GM12878 (cell line): ENCODE measurements at regions of chrX and their contacts with region 1.

Region 1: DNA sequence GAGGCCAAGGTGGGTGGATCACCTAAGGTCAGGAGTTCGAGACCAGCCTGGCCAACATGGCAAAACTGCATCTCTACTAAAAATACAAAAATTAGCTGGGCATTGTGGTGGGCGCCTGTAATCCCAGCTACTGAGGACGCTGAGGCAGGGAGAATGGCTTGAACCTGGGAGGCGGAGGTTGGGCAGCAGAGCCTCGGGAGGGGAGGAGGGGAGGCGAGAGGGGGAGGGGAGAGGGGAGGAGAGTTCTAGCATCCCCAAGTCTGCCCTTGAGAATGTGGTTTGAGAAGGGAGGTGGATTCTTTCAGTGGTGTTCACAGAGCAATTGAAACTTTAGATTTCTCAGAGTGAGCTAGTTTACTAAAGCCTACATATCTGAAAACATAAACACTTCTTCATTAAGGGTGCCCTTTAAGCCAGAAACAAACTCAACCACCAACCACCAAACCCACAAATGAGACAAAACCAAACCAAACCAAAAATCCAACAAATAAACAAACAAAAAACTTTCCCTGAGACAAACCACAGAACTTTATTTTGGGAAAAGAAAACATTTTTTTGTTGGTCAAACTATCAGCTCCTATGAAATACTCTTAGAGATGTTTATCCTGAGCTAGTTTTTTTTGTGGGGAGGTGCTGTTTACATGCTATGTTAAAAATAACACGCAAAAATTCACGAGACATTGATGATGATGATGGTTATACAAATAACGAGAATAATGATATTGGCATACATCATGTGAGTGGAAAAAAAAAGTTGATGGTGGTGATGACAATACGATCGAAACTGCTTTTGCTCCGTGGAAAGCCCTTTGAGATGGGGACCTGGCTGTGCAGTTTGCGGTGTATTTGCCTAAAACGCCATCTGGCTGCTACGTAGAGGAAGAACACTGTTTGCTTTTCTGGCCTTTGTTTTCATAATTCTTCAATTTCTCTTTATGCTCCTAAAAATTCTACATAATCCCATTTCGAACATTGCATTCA is 98.2 kb upstream of the PRKX start:
- DNase-seq: peak; percentile 84
- ATAC-seq: peak; percentile 22
- H3K4me3 ChIP-seq: no peak overlapping the region; the same call in 1 of the 2 replicates
- H3K27ac ChIP-seq: peak overlapping the region; percentile 39
- H3K4me1 ChIP-seq: peaks cover 24% of the 10 kb centered on the region
- H3K27me3 ChIP-seq: 0 out of 4 replicates have a peak, but pooled peaks cover under 1 to 2% of the 10 kb centered on the region in 2 experiments
- CTCF ChIP-seq: peak; percentile 59 to 86 (median 75); a peak in 5 of 6 replicates
- EP300 ChIP-seq: peak; percentile 40 to 72; a peak in 3 of 4 replicates
- POLR2A ChIP-seq: no peak
- RAD21 ChIP-seq: peak; percentile 90

Region 2: GRCh38 chrX:3046253-3047240 is 765.1 kb before region 1 on chrX:
- CTCF ChIA-PET with region 1: no interaction called
- POLR2A ChIA-PET with region 1: no interaction called
- RAD21 ChIA-PET with region 1: no interaction called
- SMC1A ChIA-PET with region 1: no interaction called
- in situ Hi-C with region 1: loop called (anchors 25 kb)
- intact Hi-C with region 1: no loop called
- DNase-seq: no peak
- ATAC-seq: peak; percentile 41; the same call in 2 of the 3 replicates
- H3K4me3 ChIP-seq: no peak overlapping the region
- H3K27ac ChIP-seq: no peak overlapping the region
- H3K4me1 ChIP-seq: no peaks in the 10 kb centered on the region
- H3K27me3 ChIP-seq: no peaks in the 10 kb centered on the region
- CTCF ChIP-seq: no peak
- EP300 ChIP-seq: no peak
- POLR2A ChIP-seq: no peak
- RAD21 ChIP-seq: no peak

Region 3: DNA sequence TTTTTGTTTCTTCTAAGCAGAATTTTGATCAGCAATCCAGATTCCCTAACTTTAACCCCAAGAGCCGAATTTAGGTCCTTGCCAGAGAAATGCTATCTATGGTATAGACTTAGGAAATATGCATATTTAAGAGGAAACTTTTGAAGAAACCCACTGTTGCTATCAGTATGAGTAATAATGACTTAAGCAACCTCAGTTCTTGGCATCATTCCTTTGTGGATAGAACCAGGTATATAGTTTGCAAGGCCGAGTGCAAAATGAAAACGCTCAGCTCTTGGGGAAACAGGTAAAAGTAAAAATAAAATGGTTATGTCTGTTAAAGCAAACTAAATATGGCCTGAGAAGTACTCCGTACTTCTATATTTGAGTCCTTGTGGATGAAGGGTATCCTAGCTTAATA is 692.2 kb before region 1 on chrX:
- CTCF ChIA-PET with region 1: interaction called, 5 read pairs
- POLR2A ChIA-PET with region 1: no interaction called
- RAD21 ChIA-PET with region 1: interaction called, 4 read pairs
- SMC1A ChIA-PET with region 1: no interaction called
- in situ Hi-C with region 1: no loop called
- intact Hi-C with region 1: loop called (anchors 5 kb)
- DNase-seq: no peak
- ATAC-seq: no peak
- H3K4me3 ChIP-seq: no peak overlapping the region
- H3K27ac ChIP-seq: no peak overlapping the region
- H3K4me1 ChIP-seq: no peaks in the 10 kb centered on the region
- H3K27me3 ChIP-seq: no peaks in the 10 kb centered on the region
- CTCF ChIP-seq: no peak
- EP300 ChIP-seq: no peak
- POLR2A ChIP-seq: no peak
- RAD21 ChIP-seq: no peak

Region 4: GRCh38 chrX:3651276-3651675 is 160.3 kb before region 1 on chrX:
- CTCF ChIA-PET with region 1: interaction called, 44 read pairs
- POLR2A ChIA-PET with region 1: interaction called, 4 read pairs
- RAD21 ChIA-PET with region 1: interaction called, 34 read pairs
- SMC1A ChIA-PET with region 1: interaction called, 24 read pairs
- in situ Hi-C with region 1: loop called (anchors 5 kb)
- intact Hi-C with region 1: loop called (anchors 1 kb)
- DNase-seq: no peak
- ATAC-seq: peak; percentile 45; the same call in 1 of the 3 replicates
- H3K4me3 ChIP-seq: no peak overlapping the region
- H3K27ac ChIP-seq: no peak overlapping the region
- H3K4me1 ChIP-seq: no peaks in the 10 kb centered on the region
- H3K27me3 ChIP-seq: no peaks in the 10 kb centered on the region
- CTCF ChIP-seq: peak; percentile 46 to 63 (median 55); a peak in 5 of 6 replicates
- EP300 ChIP-seq: no peak
- POLR2A ChIP-seq: no peak
- RAD21 ChIP-seq: peak; percentile 65

Region 5: GRCh38 chrX:3713225-3713936 is 98.2 kb before region 1 on chrX and contains the start of gene PRKX:
- CTCF ChIA-PET with region 1: interaction called, 8 read pairs
- POLR2A ChIA-PET with region 1: interaction called, 8 read pairs
- RAD21 ChIA-PET with region 1: interaction called, 5 read pairs
- SMC1A ChIA-PET with region 1: interaction called, 8 read pairs
- in situ Hi-C with region 1: loop called (anchors 5 kb)
- intact Hi-C with region 1: loop called (anchors 1 kb)
- DNase-seq: peak; percentile 13
- ATAC-seq: peak; percentile 86
- H3K4me3 ChIP-seq: peak within 1 kb of the TSS; percentile 83
- H3K27ac ChIP-seq: peak within 1 kb of the TSS; percentile 81
- H3K4me1 ChIP-seq: peaks cover 5% of the 10 kb centered on the region
- H3K27me3 ChIP-seq: no peaks in the 10 kb centered on the region
- CTCF ChIP-seq: no peak
- EP300 ChIP-seq: no peak
- POLR2A ChIP-seq: peak; percentile 81
- RAD21 ChIP-seq: no peak
- polyA plus RNA-seq, gene PRKX: 3.9 to 5.4 TPM

Region 6: GRCh38 chrX:3940000-3940610 is 128.5 kb after region 1 on chrX:
- CTCF ChIA-PET with region 1: no interaction called
- POLR2A ChIA-PET with region 1: no interaction called
- RAD21 ChIA-PET with region 1: no interaction called
- SMC1A ChIA-PET with region 1: no interaction called
- in situ Hi-C with region 1: loop called (anchors 25 kb)
- intact Hi-C with region 1: no loop called
- DNase-seq: no peak
- ATAC-seq: peak; percentile 58
- H3K4me3 ChIP-seq: no peak overlapping the region
- H3K27ac ChIP-seq: no peak overlapping the region
- H3K4me1 ChIP-seq: no peaks in the 10 kb centered on the region
- H3K27me3 ChIP-seq: no peaks in the 10 kb centered on the region
- CTCF ChIP-seq: peak; percentile 31 to 59 (median 51); a peak in 5 of 6 replicates
- EP300 ChIP-seq: no peak
- POLR2A ChIP-seq: no peak
- RAD21 ChIP-seq: peak; percentile 59

Region 7: DNA sequence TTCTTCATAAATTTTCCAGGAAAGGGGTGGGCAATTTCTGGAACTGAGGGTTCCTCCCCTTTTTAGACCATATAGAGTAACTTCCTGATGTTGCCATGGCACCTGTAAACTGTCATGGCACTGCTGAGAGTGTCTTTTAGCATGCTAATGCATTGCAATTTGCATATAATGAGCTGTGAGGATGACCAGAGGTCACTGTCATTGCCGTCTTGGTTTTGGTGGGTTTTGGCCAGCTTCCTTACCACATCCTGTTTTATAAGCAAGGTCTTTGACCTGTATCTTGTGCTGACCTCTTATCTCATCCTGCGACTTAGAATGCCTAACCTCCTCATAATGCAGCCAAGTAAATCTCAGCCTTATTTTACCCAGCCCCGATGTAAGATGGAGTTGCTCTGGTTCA is 1839.3 kb after region 1 on chrX:
- CTCF ChIA-PET with region 1: no interaction called
- POLR2A ChIA-PET with region 1: no interaction called
- RAD21 ChIA-PET with region 1: no interaction called
- SMC1A ChIA-PET with region 1: no interaction called
- in situ Hi-C with region 1: loop called (anchors 25 kb)
- intact Hi-C with region 1: no loop called
- DNase-seq: no peak
- ATAC-seq: peak; percentile 55
- H3K4me3 ChIP-seq: no peak overlapping the region
- H3K27ac ChIP-seq: no peak overlapping the region
- H3K4me1 ChIP-seq: peaks cover 23% of the 10 kb centered on the region
- H3K27me3 ChIP-seq: no peaks in the 10 kb centered on the region
- CTCF ChIP-seq: no peak
- EP300 ChIP-seq: no peak
- POLR2A ChIP-seq: no peak
- RAD21 ChIP-seq: no peak